Lower leg skin (tissue), 4 donors: ENCODE measurements at regions of chr17 and their contacts with region 1.

Region 1: GRCh38 chr17:409848-410545 is 57.4 kb upstream of the RPH3AL start:
- DNase-seq: peak; percentile 99 to 100
- H3K4me3 ChIP-seq: peak overlapping the region; percentile 62
- CTCF ChIP-seq: no peak
- POLR2A ChIP-seq: no peak

Region 2: DNA sequence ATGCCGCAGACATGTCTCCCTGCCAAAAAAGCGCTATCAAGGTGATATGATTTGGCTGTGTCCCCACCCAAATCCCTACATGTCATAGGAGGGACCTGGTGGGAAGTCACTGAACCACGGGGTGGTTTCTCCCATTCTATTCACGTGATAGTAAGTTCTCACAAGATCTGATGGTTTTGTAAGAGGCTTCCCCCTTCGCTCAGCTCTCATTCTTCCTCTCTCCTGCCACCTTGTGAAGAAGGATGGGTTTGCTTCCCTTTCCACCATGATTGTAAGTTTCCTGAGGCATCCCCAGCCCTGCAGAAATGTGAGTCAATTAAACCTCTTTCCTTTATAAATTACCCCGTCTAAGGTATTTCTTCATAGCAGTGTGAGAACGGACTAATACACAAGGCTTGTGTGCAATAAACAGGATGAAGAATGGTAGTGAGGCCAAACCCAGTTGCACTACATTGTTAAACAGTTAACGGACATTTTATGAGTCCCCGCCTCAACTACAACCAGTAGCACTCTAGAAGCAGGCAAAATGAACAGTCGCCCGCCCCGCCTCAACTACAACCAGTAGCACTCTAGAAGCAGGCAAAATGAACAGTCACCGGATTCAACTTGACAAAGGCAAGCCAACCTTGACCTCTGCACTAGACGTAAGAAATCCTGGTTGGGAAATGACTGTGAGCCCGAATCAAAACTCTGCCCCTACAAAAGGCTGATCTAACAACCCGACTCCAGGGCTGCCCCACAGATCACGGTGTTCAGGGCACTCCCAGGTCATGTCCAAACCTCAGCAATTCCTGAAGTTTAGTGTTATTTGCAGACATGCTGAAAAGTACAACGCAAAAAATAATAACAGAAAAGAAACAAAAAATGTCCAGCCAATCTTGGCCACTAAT is 278.3 kb after region 1 on chr17:
- intact Hi-C with region 1: no loop called
- DNase-seq: no peak
- H3K4me3 ChIP-seq: no peak overlapping the region
- CTCF ChIP-seq: no peak
- POLR2A ChIP-seq: no peak

Region 3: DNA sequence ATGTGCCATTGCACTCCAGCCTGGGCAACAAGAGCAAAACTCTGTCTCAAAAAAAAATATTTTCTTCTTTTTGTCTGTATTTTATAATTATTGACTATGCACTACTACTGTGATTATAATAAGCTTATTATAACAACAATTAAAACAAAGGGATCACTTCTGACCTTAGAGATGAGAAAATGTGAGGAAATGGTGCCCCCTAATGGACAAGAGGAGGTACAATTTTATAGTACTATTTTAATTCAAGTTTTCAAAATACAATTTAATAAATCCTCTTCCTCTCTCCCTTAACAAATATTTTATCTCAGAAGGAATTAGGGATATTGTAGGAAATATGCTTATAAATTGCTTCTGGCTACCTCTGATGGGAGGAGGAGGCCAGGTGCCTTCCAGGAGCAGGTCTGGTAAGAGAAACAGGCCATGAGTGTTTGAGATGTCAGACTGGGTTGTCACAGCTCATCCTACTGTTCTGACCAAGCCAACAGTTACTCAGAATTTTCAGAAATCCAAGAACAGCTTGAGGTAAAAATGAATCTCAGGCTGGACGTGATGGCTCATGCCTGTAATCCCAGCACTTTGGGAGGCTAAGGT is 290.6 kb after region 1 on chr17:
- intact Hi-C with region 1: loop called (anchors 5 kb)
- DNase-seq: peak in 1 of 2 donors; percentile 4
- H3K4me3 ChIP-seq: no peak overlapping the region
- CTCF ChIP-seq: no peak
- POLR2A ChIP-seq: no peak

Region 4: GRCh38 chr17:752002-752619 is 342.1 kb after region 1 on chr17 and contains the start of gene GEMIN4:
- intact Hi-C with region 1: loop called (anchors 5 kb)
- DNase-seq: peak; percentile 89 to 98
- H3K4me3 ChIP-seq: peak within 1 kb of the TSS; percentile 52
- CTCF ChIP-seq: peak in 1 of 3 donors; percentile 56
- POLR2A ChIP-seq: peak in 1 of 2 donors; percentile 39
- total RNA-seq, gene GEMIN4: 27.7 to 48.3 (median 37.7) TPM